Right ventricle myocardium inferior (tissue), 1 donor: ENCODE measurements at regions of chr5 and their contacts with region 1.

Region 1: DNA sequence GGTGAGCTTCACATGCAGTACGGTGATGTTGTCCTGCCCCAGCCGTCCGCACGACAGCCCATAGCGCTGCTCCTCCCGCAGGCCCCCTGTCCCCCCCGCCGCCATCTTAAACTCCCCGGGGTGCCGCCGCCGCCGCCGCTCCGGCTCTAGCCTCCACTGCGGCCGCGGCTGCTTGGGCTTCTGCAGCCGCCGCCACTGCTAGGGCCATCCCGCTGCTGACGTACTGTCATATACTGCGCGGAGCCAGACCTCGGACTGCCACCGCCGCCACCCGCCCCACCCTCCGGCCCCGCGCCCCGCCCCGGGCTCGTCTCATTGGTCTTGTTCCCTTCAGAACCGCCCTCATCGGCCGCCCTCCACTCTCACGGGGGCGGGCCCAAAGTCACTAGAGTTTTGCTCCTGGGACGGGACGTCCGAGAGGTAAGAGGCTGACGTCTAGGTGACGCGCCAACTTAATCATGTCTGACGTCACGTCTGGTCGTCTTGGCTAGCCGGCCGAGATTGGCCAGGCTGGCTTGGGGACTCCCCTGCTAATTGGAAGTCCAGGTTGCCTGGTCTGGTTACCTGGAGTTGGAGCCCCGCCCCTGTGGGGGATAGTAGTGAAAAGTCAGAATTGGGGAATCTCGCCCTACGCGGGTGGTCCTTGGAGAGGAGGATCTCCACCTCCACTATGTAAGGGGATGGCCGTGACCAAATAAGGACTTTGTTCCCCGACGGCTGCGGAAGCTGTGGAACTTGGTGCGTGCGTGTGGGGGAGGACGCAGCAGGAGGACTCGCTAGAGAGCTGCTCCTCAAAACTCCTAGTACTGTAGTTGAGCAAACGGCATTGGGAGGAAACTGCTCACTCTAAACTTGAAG is at the start of gene ELL2:
- DNase-seq: peak; percentile 99
- ATAC-seq: peak; percentile 93
- total RNA-seq, gene ELL2: 26.7 TPM

Region 2: DNA sequence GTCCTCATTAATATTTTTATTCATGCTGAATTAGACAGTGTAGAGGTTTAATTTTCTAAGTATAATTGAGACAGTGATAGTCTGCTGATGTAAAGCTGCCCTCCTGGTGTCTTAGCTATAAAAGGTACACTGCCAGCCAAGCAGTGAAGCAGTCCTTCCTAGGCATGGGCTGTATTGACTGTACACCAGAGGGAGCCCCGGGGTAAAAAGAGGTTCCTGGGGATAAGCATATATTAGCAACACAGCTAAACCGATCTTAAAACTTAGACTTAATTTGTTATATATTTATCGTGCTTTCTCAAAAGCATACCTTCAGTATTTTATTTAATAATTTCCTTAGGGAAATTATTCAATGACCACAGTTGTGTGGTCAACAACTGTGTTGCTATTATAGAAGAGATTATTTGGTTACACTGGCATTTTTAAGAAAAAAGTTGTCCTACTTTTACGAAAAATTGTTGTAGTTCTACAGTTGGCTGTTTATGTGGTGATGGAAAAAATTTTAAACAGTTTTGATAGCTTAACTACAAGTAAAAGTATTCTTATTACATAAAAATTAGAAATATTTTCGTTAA is 69.0 kb before region 1 on chr5:
- intact Hi-C with region 1: loop called (anchors 5 kb)
- DNase-seq: no peak
- ATAC-seq: peak; percentile 63

Region 3: DNA sequence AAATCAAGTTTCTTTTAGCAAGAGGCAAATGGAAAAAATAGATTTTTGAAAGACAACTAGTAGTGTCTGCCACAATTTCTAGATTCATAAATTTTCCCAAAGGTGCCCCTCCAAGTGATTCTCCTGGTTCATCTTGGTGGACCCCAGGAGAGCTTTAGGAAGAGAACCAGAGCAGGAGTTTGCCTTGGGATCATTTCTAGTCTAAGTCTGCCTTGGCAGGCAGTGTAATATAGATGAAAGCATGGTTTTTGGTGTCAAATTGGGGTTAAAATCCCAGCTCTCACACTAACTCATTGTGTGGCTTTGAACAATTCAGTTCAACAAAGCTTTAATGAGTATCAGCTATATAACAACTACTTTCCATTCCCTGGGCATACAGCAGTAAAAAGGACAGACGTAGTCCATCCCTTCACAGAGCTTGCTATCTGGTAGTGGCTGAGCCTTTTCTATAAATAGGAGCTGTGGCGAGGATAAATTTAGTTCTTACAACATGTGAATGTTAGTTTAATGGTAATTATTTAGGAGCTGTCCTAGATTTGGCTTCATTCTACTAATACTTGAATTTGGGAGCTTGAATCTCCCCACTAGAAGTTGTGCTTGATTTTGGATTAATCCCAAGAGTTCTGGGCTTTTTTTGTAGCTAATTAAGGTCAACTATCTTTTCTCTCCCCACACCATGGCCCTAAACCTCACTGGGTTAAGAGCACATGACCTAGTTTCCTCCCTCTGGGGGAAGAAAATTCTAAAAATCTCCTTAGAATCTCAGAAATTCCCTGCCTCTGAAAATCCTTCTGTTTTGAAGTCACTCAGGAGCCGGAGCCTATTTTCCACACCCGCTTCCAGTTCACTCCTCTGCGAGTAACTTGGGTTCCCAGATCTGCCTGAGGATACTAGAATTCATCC is 273.4 kb after region 1 on chr5:
- intact Hi-C with region 1: loop called (anchors 10 kb)
- DNase-seq: no peak
- ATAC-seq: peak; percentile 93